ENCODE measurements at regions of chr9 and their contacts with region 1.

Region 1: DNA sequence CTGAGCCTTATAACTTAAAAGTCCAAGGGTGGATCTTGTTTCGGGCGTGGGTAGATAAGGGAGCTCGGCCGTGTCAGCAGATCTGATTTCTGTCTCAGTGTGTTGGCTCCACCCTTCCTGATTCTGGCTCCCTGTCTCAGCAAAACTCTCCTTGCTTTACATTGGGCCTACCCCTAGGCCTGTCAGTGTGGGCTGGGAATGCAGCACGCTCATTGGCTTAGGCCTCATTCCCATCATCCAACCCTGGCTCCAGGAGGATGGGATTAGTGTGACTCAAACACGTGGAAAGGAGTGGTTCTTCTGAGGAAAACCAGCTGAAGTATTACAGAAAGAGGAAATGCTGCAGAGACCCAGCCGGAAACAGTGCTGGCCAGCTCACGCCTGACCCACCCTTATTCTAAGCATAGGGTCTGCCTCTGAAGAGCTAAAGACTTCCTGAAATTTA is 59.9 kb downstream of the ZFAND5 start:
- DNase-seq: peak; percentile 35
- ATAC-seq: peak; percentile 79
- H3K4me3 Mint-ChIP-seq: peak overlapping the region; percentile 73
- H3K27ac Mint-ChIP-seq: peak overlapping the region; percentile 95
- H3K4me1 Mint-ChIP-seq: peaks cover 62% of the 10 kb centered on the region
- H3K27me3 Mint-ChIP-seq: no peaks in the 10 kb centered on the region
- CTCF ChIP-seq: no peak

Region 2: DNA sequence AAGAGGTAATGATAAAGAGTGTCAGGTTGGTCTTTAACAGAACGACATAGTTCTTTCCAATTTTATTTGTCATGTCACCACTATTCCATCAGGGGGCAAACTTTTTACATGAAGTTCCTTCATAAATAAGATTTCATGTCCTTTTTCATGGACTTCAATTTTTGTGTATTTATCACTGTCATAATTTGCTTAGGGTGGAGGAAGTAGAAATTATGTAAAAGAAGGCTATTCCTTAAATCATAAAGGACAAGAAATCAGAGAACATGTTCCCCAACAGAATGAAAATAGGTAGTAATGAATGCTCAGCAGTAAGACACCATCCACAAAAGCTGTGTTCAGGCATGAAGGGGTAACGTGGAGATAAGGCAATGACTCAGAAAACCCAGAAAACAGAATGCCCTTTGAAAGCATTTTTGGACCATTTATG is 12.9 kb before region 1 on chr9:
- CTCF ChIA-PET with region 1: interaction called, 5 read pairs
- POLR2A ChIA-PET with region 1: interaction called, 5 read pairs
- intact Hi-C with region 1: loop called (anchors 1 kb)
- DNase-seq: no peak
- ATAC-seq: peak; percentile 52
- H3K4me3 Mint-ChIP-seq: no peak overlapping the region
- H3K27ac Mint-ChIP-seq: no peak overlapping the region
- H3K4me1 Mint-ChIP-seq: peaks cover 17% of the 10 kb centered on the region
- H3K27me3 Mint-ChIP-seq: no peaks in the 10 kb centered on the region
- CTCF ChIP-seq: no peak